ENCODE measurements at regions of chr1 and their contacts with region 1.

Region 1: DNA sequence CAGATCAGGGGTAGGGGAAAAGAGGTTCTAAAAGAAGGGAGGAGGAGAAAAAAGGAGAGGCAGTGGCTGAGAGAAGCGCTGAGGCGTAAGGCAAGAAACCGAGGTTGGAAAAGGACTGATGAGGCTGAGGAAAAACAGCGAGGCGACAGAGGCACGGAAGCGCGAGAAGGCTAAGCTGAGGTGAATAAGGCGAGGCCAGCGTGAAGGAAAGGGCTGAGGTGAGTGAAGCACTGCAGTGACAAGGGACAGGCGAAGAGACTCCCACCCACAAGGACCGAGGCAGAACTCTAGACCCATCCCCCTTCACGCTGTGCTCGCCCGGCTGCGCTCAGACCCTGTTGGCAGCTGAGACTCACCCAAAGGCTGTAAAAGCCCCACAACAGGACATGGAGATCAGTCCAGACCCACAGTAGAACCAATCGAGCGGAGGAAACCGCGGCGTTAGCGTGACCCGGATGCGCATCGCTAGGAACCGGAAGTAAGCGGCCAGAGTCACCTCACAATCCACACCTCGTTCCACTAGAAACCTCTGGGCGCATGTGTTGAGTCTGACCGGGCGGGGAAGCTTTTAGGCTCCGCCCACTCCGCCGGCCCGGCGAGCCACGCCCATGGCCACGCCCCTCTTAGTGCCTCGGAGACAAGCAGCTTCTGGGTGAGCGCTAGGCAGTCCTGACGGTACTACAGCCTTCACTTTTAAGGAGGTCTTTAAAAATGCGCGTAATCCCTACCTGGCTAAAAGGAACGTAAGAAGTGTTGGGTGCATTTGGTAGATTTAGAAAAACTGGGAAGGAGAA is at the start of gene EYA3:
- DNase-seq: peak; percentile 92 to 100 (median 98)
- ATAC-seq: peak; percentile 93 to 97 (median 96)
- H3K4me3 ChIP-seq: peak within 1 kb of the TSS; percentile 82 to 98
- H3K4me3 Mint-ChIP-seq: peak within 1 kb of the TSS; percentile 95
- H3K27ac ChIP-seq: peak within 1 kb of the TSS; percentile 73
- H3K27ac Mint-ChIP-seq: peak within 1 kb of the TSS; percentile 89 to 94
- H3K4me1 ChIP-seq: peaks cover 13 to 19% of the 10 kb centered on the region in 2 experiments
- H3K4me1 Mint-ChIP-seq: peaks cover 46 to 49% (median 48%) of the 10 kb centered on the region in 3 donors
- H3K27me3 ChIP-seq: no peaks in the 10 kb centered on the region
- H3K27me3 Mint-ChIP-seq: peaks cover 0 to 3% of the 10 kb centered on the region in 2 donors
- total RNA-seq, gene EYA3: 15.0 to 20.2 (median 16.7) TPM

Region 2: DNA sequence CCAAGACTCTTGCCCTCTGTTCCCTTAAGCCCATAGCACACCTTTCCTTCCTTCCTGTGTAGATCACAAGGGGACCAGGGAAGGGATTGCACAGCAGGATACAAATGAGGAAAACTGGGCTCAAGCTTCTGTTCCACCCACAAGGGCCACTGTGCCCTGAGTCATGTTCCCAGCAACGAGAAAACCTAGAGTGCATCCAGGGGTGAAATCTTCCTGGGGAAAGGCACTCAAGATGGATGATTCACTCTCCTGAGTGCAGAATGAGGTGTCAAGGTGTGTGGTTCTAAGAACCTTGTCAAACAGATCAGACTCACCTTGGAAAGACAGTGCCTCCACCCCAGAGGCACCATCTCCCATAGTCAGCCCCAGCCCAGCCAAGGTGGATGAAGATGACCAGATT is 40.8 kb after region 1 on chr1:
- CTCF ChIA-PET with region 1: no interaction called
- POLR2A ChIA-PET with region 1: no interaction called
- DNase-seq: no peak
- ATAC-seq: no peak
- H3K4me3 ChIP-seq: no peak overlapping the region
- H3K4me3 Mint-ChIP-seq: no peak overlapping the region
- H3K27ac ChIP-seq: no peak overlapping the region
- H3K27ac Mint-ChIP-seq: no peak overlapping the region
- H3K4me1 ChIP-seq: no peaks in the 10 kb centered on the region
- H3K4me1 Mint-ChIP-seq: no peaks in the 10 kb centered on the region
- H3K27me3 ChIP-seq: peaks cover 0 to 4% of the 10 kb centered on the region in 2 experiments
- H3K27me3 Mint-ChIP-seq: peaks cover 6 to 18% of the 10 kb centered on the region in 2 donors

Region 3: DNA sequence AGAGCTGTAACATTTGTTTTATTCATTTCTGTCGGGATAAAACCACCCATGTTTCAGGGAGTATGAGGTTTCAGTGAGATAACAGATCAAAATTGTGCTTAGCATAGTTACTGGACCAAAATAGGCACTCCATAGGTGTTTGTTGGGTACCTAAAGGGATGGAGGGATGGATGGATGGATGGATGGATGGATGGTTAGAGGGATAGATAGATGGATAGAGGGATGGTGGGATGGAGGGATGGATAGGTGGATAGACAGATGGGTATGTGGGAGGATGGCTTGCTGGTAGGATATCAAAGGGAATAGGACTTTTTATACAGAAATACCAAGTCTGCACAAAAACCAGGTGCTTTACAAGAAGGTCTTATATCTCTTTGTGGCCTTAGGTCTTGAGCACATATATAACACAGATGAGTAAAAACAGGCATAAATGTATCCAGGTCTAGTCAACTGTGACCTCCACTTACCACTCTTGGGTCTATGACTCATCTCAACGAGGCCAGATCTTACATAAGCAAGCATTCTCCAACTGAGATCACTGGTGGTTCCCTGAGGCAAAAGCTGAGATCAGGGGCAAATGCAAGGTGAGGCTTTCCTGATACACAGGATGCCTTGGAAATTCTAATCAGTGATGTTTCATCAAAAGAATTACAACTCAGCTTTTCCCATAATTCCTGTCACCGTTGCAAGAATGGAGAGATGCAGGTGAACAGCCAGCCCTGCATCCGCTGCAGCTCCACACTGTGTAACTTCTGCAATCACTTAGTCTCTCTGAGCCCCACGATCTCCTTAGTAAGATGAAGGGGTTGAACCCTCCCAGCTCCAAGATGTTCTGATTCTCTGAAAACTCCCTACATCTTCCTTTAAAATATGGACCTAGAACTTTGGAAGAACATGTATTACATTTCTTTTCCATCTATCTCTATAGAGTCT is 56.1 kb after region 1 on chr1:
- CTCF ChIA-PET with region 1: no interaction called
- POLR2A ChIA-PET with region 1: no interaction called
- DNase-seq: no peak
- ATAC-seq: no peak
- H3K4me3 ChIP-seq: no peak overlapping the region
- H3K4me3 Mint-ChIP-seq: no peak overlapping the region
- H3K27ac ChIP-seq: no peak overlapping the region
- H3K27ac Mint-ChIP-seq: no peak overlapping the region
- H3K4me1 ChIP-seq: no peaks in the 10 kb centered on the region
- H3K4me1 Mint-ChIP-seq: no peaks in the 10 kb centered on the region
- H3K27me3 ChIP-seq: peaks cover 0 to 2% of the 10 kb centered on the region in 2 experiments
- H3K27me3 Mint-ChIP-seq: no peaks in the 10 kb centered on the region

Region 4: DNA sequence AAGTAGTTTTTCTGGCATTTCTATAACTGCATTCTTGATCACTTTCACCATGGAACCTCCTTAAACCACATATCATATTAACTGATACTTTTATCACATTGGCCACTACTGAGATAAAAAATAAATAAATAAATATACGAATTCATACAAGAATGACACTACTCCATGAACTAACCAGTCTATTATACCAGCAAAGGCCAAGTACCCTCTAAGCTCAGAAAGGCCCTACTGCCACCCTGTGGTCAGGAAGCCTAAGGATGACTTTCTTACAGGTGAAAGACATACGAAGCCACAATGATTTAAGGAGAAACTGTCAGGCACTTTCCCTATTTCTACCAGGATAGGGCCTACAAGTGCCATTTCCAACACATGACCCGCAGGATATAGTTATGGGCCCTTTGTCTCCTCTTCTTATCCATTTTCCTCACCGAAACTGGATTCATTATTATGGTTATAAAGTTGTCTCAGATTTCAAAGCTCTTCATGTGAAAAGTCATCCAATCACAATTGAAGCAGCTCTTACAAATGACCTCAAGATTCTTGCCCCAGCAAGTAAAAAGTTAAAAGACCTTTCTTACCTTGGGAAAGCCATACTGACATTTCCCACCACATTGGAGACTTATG is 120.6 kb after region 1 on chr1:
- CTCF ChIA-PET with region 1: interaction called, 10 to 69 read pairs
- POLR2A ChIA-PET with region 1: interaction called in 1 of 2 experiments, 4 read pairs
- DNase-seq: peak in 34 of 35 experiments; percentile 9 to 77 (median 56)
- ATAC-seq: peak; percentile 58 to 84 (median 73)
- H3K4me3 ChIP-seq: no peak overlapping the region
- H3K4me3 Mint-ChIP-seq: no peak overlapping the region
- H3K27ac ChIP-seq: no peak overlapping the region
- H3K27ac Mint-ChIP-seq: no peak overlapping the region
- H3K4me1 ChIP-seq: no peaks in the 10 kb centered on the region
- H3K4me1 Mint-ChIP-seq: peaks cover 0 to 6% (median 3%) of the 10 kb centered on the region in 3 donors
- H3K27me3 ChIP-seq: no peaks in the 10 kb centered on the region
- H3K27me3 Mint-ChIP-seq: no peaks in the 10 kb centered on the region

Region 5: DNA sequence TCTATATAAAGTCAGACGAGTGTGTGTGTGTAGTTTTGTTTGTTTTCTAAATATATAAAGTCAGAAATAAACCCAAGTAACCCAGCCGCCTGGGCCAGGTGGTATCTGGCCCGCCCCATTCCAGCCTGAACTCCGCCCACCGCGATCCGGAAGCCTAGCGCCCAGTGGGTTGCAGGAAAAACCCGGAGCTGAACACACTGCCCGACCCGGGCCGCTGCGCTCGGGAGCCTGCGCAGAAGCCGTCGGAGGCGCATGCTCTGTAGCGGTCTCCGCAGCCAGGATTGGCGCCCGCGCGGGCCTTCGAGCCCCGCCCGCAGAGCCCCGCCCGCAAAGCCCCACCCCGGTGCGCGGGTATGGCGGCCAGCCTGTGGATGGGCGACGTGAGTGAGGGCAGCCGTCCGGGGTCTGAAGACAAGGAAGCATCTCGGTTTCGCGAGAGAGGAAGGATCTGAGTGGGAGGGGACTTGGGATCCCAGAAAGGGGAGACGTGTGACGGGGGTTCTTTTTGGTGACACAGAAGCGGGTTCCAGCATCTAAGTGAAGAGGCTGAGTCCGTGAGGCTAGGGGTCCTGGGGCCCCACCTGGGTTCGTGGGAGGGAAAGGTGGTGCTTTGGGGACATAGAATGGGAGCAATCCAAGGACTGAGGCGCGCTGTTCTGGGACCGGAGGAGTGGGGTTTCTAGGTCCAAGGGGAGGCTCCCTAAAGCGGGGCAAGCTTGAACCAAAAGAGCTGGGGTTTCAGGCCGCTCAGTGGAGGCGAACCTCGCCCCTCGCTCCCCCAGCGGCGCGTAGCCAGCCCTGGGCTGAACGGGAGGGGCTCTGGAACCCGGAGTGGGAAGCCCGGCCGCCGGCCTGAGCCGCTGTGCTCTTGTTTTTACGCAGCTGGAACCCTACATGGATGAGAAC is 464.6 kb after region 1 on chr1 and contains the start of gene TRNAU1AP:
- CTCF ChIA-PET with region 1: no interaction called
- POLR2A ChIA-PET with region 1: interaction called in 1 of 2 experiments, 18 read pairs
- DNase-seq: peak; percentile 92 to 98 (median 96)
- ATAC-seq: peak; percentile 93 to 97 (median 95)
- H3K4me3 ChIP-seq: peak within 1 kb of the TSS; percentile 88 to 89
- H3K4me3 Mint-ChIP-seq: peak within 1 kb of the TSS; percentile 91 to 99 (median 98)
- H3K27ac ChIP-seq: peak within 1 kb of the TSS; percentile 77
- H3K27ac Mint-ChIP-seq: peak within 1 kb of the TSS; percentile 95 to 97
- H3K4me1 ChIP-seq: peaks cover 2 to 20% of the 10 kb centered on the region in 2 experiments
- H3K4me1 Mint-ChIP-seq: peaks cover 22 to 27% (median 26%) of the 10 kb centered on the region in 3 donors
- H3K27me3 ChIP-seq: no peaks in the 10 kb centered on the region
- H3K27me3 Mint-ChIP-seq: no peaks in the 10 kb centered on the region
- total RNA-seq, gene TRNAU1AP: 28.6 to 47.6 (median 41.3) TPM